ENCODE measurements at regions of chr5 and their contacts with region 1.

Region 1: DNA sequence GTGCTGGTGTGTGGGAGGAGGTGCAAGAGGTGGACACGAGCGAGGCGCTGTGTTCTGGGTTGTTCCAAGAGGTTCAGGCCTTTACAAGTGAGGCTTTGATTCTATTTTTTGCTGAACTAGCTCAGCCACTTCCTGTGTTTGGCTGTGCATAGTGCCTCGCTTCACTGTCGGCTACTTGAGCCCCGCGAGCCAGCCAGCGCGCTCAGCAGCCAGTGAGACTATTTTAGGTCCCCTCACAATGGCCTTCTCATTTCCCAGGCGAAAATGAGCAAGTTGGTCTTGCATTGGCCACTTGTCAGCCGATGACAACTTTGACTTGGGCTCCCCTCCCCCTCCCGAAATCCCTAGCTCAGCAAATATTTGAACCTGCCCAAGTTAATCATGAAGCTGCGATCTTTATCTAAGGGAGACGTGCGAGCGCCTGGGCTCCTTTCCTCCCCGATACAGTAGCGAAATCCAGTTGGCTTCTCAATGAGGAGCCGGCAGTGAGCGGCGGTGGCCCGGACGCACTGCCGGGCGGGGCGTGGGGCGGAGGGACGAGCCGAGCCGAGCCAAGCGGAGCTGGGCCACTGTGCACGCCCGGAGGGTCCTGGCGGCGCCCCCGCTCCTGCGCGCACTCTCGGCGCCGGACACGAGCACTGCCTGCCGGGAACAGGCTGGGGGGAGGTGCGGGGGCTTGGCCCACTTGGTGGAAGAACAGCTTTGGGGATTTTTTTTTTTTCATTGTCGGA is 72.6 kb downstream of the PIK3R1 start:
- DNase-seq: peak; percentile 83
- H3K4me3 ChIP-seq: peak overlapping the region; percentile 57 to 59
- H3K27ac ChIP-seq: peak overlapping the region in 1 of 2 experiments; percentile 97; a peak in 3 of 4 replicates
- H3K4me1 ChIP-seq: peaks cover 7 to 17% of the 10 kb centered on the region in 2 experiments; a peak in 3 of 4 replicates
- H3K27me3 ChIP-seq: no peaks in the 10 kb centered on the region
- CTCF ChIP-seq: no peak
- EP300 ChIP-seq: no peak
- RAD21 ChIP-seq: no peak

Region 2: GRCh38 chr5:68261569-68262065 is 26.5 kb before region 1 on chr5:
- CTCF ChIA-PET with region 1: no interaction called
- POLR2A ChIA-PET with region 1: no interaction called
- DNase-seq: no peak
- H3K4me3 ChIP-seq: no peak overlapping the region
- H3K27ac ChIP-seq: peak overlapping the region in 1 of 2 experiments; percentile 68; a peak in 2 of 4 replicates
- H3K4me1 ChIP-seq: peaks cover 15 to 49% of the 10 kb centered on the region in 2 experiments; a peak in 3 of 4 replicates
- H3K27me3 ChIP-seq: no peaks in the 10 kb centered on the region
- CTCF ChIP-seq: peak; percentile 26; the same call in 1 of the 2 replicates
- EP300 ChIP-seq: no peak
- RAD21 ChIP-seq: peak; percentile 19; the same call in 1 of the 2 replicates

Region 3: GRCh38 chr5:68272289-68272688 is 15.9 kb before region 1 on chr5:
- CTCF ChIA-PET with region 1: interaction called, 20 read pairs
- POLR2A ChIA-PET with region 1: interaction called, 3 read pairs
- DNase-seq: no peak
- H3K4me3 ChIP-seq: no peak overlapping the region; a peak in 1 of 4 replicates
- H3K27ac ChIP-seq: no peak overlapping the region; a peak in 2 of 4 replicates
- H3K4me1 ChIP-seq: peaks cover 19 to 25% of the 10 kb centered on the region in 2 experiments; a peak in 3 of 4 replicates
- H3K27me3 ChIP-seq: no peaks in the 10 kb centered on the region
- CTCF ChIP-seq: peak; percentile 70
- EP300 ChIP-seq: no peak
- RAD21 ChIP-seq: peak; percentile 52

Region 4: DNA sequence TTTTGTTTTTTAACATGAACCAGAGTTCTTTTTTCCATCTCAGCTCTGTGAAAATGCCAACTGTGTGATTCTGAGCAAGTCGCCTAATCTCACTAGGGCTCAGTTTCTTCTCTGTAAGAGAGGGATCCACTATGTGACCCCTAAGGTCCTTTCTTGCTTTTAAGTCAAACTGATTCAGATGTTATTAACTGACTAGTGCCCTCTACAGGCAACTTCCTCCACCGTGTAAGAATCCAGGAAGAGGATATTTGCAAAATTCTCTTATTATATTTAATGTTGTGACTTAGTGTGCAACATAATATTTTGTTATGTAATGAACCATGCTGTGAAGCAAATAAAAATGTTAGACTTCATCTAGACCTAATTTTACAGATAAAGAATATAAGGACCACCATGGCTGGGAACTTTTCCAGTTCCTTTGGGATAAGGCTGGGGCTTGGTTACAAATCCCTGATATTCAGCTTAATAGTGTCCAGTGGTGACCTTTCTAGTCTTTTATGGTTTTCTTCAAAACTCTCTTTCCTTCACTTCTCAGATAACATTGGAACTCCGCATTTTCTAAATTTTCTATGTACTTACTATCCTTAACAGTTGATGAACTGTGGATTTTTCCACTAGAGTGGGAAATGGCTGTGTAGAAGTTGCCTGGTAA is 172.1 kb after region 1 on chr5:
- CTCF ChIA-PET with region 1: interaction called, 23 read pairs
- POLR2A ChIA-PET with region 1: no interaction called
- DNase-seq: peak; percentile 37
- H3K4me3 ChIP-seq: peak overlapping the region in 1 of 2 experiments; percentile 26; a peak in 1 of 4 replicates
- H3K27ac ChIP-seq: peak overlapping the region in 1 of 2 experiments; percentile 39; a peak in 2 of 4 replicates
- H3K4me1 ChIP-seq: peaks cover 0 to 5% of the 10 kb centered on the region in 2 experiments; a peak in 3 of 4 replicates
- H3K27me3 ChIP-seq: no peaks in the 10 kb centered on the region
- CTCF ChIP-seq: peak; percentile 81
- EP300 ChIP-seq: no peak
- RAD21 ChIP-seq: peak; percentile 79

Region 5: DNA sequence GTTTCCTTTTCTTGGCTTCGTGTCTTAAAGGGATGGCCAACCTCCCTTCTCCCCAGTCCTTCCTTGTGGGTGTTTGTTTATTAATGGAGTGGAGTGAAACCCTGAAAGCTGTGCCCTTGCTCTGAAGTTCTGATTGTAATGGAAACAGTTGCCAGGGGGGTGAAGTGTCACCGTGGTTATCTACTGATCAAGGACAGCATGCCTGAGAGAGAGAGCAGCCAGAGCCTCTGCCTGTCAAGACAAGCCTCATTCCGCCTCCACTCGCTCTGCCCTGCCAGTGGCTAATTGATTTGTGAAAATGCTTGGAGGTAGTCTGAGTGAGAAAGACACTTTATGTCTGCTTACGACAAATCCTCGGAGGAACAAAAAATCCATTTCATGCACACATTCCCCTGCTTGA is 662.0 kb after region 1 on chr5:
- CTCF ChIA-PET with region 1: interaction called, 10 read pairs
- POLR2A ChIA-PET with region 1: no interaction called
- DNase-seq: peak; percentile 69
- H3K4me3 ChIP-seq: no peak overlapping the region
- H3K27ac ChIP-seq: peak overlapping the region in 1 of 2 experiments; percentile 72; a peak in 2 of 4 replicates
- H3K4me1 ChIP-seq: peaks cover 0 to 14% of the 10 kb centered on the region in 2 experiments; a peak in 2 of 4 replicates
- H3K27me3 ChIP-seq: no peaks in the 10 kb centered on the region
- CTCF ChIP-seq: no peak
- EP300 ChIP-seq: peak in 1 of 2 experiments; percentile 69; a peak in 1 of 4 replicates
- RAD21 ChIP-seq: no peak

Region 6: GRCh38 chr5:68962757-68963484 is 674.8 kb after region 1 on chr5:
- CTCF ChIA-PET with region 1: interaction called, 19 read pairs
- POLR2A ChIA-PET with region 1: no interaction called
- DNase-seq: peak; percentile 74
- H3K4me3 ChIP-seq: peak overlapping the region in 1 of 2 experiments; percentile 47; a peak in 1 of 4 replicates
- H3K27ac ChIP-seq: no peak overlapping the region; a peak in 1 of 4 replicates
- H3K4me1 ChIP-seq: no peaks in the 10 kb centered on the region; a peak in 1 of 4 replicates
- H3K27me3 ChIP-seq: no peaks in the 10 kb centered on the region
- CTCF ChIP-seq: peak; percentile 87
- EP300 ChIP-seq: no peak
- RAD21 ChIP-seq: peak; percentile 88

Region 7: DNA sequence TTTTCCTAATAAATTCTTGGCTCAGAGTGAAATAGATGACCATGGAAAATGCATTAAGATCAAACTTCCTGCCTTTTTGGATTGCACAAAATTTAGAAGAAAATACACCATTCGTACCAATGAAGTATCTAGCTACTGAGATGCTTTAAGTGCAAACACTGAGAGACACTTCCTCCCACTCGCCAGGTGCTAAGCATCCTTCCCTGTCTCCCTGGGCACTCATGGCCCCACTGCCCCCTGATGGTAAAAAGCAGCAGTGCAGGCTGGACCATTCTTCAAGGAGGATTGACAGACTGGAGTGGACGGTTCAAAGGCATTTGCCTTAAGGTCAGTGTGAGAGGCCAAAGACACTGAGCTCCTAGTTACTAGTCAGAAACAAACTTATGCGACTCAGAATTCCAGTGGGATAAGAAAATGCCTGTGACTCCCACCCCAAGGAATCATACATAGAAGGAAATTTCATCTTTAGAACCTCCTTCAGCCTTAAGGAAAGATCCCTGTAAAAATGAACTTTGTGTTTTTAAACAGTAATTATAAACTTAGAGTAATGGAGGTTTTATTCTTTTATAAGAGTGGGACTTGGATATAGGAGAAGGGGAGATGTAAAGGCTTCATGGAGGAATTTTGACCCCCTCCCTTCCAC is 719.7 kb after region 1 on chr5:
- CTCF ChIA-PET with region 1: interaction called, 43 read pairs
- POLR2A ChIA-PET with region 1: interaction called, 5 read pairs
- DNase-seq: peak; percentile 70
- H3K4me3 ChIP-seq: peak overlapping the region in 1 of 2 experiments; percentile 12; a peak in 2 of 4 replicates
- H3K27ac ChIP-seq: peak overlapping the region in 1 of 2 experiments; percentile 93; a peak in 2 of 4 replicates
- H3K4me1 ChIP-seq: peaks cover 0 to 11% of the 10 kb centered on the region in 2 experiments; a peak in 1 of 4 replicates
- H3K27me3 ChIP-seq: no peaks in the 10 kb centered on the region
- CTCF ChIP-seq: peak; percentile 77
- EP300 ChIP-seq: 0 out of 4 replicates have a peak, but pooled peaks of 1 of the 2 experiments have one; percentile 8
- RAD21 ChIP-seq: peak; percentile 90

Region 8: DNA sequence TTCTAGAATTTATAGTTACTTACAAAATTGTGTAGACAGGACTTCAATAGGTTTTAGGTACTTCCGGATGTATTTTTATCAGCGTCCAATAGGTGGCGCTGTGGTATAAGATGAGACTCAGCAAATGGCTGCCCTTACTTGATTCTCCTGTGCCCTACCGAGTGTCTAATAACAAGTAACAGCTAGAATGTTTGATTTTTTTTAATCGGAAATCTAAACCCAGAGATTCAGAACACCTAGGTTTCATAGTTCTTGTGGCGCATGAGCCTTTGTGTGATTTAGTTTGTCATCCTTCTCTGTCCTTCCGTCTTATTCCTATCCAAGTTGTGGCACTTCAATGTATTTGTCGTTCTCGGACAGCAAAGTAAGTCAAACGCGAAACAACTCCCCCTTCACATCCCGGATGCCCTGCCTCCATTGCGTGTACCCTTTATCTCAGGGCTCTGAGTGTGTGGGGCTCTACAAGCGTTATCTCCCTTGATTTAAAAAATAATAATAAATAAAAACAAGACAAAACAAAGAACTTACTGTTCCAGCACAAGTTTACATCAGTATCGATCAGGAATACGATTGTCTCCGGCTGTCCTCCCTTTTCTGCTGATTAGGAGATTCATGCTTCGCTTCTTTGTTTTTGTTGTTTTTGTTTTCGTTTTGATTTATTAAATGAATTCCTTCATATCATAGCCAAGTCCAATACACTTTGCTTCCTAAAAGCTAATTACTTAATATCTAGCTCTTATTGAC is 754.9 kb after region 1 on chr5:
- CTCF ChIA-PET with region 1: interaction called, 14 read pairs
- POLR2A ChIA-PET with region 1: no interaction called
- DNase-seq: peak; percentile 63
- H3K4me3 ChIP-seq: no peak overlapping the region
- H3K27ac ChIP-seq: peak overlapping the region in 1 of 2 experiments; percentile 44; a peak in 2 of 4 replicates
- H3K4me1 ChIP-seq: no peaks in the 10 kb centered on the region; a peak in 1 of 4 replicates
- H3K27me3 ChIP-seq: no peaks in the 10 kb centered on the region
- CTCF ChIP-seq: peak; percentile 89
- EP300 ChIP-seq: no peak
- RAD21 ChIP-seq: peak; percentile 91

Measured in SK-N-SH (cell line).